ENCODE measurements at regions of chr2 and their contacts with region 1.

Region 1: GRCh38 chr2:181104512-181105115 is 124.2 kb downstream of the UBE2E3 start:
- DNase-seq: peak; percentile 20
- H3K4me3 ChIP-seq: no peak overlapping the region; a peak in 1 of 4 replicates
- H3K27ac ChIP-seq: no peak overlapping the region; a peak in 1 of 4 replicates
- H3K4me1 ChIP-seq: peaks cover 16 to 19% of the 10 kb centered on the region in 2 experiments; a peak in 3 of 4 replicates
- H3K27me3 ChIP-seq: no peaks in the 10 kb centered on the region
- CTCF ChIP-seq: peak; percentile 89
- EP300 ChIP-seq: no peak
- RAD21 ChIP-seq: peak; percentile 89

Region 2: DNA sequence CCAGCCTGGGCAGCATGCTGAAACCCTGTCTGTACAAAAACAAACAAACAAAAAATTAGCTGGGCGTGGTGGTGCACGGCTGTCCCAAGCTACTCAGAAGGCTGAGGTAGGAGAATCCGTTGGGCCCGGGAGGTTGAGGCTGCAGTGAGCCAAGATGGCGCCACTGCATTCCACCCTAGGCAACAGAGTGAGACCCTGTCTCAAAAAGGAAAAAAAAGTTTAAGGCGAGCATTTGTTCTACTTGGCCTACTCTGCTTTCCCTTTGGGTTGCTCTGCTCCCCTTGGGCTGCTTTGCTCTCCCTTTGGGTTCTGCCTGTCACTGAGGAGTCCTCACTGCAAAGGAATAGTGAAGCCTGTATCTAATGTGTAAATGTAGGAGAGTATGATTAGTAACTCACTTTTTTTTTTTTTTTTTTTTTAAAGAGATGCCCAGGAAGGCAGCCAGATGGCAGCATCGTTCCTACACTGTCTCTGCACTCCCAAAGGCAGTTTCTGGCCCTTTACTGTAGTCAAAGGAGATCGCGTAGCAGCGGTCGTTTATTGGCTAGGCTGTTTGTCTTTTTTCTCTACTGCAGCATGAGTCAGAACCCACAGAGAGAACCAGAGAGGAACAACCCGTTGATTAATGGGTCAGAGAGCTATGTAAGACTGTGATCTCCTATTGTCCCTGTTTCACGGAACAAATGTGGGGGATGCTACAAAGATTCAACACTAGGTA is 979.2 kb before region 1 on chr2:
- CTCF ChIA-PET with region 1: interaction called, 11 read pairs
- POLR2A ChIA-PET with region 1: no interaction called
- DNase-seq: peak; percentile 48
- H3K4me3 ChIP-seq: no peak overlapping the region; a peak in 1 of 4 replicates
- H3K27ac ChIP-seq: peak overlapping the region in 1 of 2 experiments; percentile 2; a peak in 1 of 4 replicates
- H3K4me1 ChIP-seq: peaks cover 2 to 3% of the 10 kb centered on the region in 2 experiments; a peak in 2 of 4 replicates
- H3K27me3 ChIP-seq: no peaks in the 10 kb centered on the region
- CTCF ChIP-seq: peak; percentile 70
- EP300 ChIP-seq: no peak; a peak in 1 of 4 replicates
- RAD21 ChIP-seq: peak; percentile 89

Region 3: DNA sequence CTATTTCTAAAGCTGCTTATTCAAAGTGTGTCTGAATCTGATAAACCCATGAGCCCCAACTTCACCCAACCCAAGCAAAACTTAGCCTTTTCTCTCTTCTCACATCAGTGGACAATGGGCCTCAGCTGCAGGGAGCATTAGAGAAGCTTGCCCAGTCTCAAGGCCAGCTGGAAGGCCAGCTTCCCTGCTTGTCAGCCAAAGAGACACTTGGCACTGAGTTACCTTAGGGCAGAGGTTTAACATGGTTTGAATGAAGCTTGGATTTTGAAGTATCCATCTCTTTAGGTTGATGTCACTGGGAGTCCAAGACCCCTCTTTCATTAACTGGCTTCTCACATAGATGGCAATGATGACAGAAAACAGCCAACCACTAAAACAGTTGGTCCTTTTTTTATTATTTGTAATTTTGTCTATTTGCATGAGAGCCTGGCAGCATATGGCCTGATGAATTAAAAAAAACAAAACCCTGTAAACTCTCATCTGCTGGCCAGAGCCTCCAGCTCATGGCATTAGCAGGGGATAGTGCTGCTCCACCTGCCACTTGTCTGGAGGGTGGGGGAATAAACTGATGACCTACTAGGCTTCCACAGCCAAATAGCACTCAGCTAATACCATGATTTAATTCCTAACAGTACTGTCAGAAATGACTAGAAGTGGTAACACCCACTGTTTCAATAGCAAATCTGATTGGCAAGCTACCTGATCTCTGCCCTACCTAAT is 12.8 kb after region 1 on chr2:
- CTCF ChIA-PET with region 1: interaction called, 11 read pairs
- POLR2A ChIA-PET with region 1: no interaction called
- DNase-seq: no peak
- H3K4me3 ChIP-seq: no peak overlapping the region
- H3K27ac ChIP-seq: no peak overlapping the region
- H3K4me1 ChIP-seq: peaks cover 0 to 5% of the 10 kb centered on the region in 2 experiments; a peak in 1 of 4 replicates
- H3K27me3 ChIP-seq: no peaks in the 10 kb centered on the region
- CTCF ChIP-seq: no peak
- EP300 ChIP-seq: no peak
- RAD21 ChIP-seq: no peak

Region 4: GRCh38 chr2:181364492-181365170 is 260.0 kb after region 1 on chr2:
- CTCF ChIA-PET with region 1: no interaction called
- POLR2A ChIA-PET with region 1: no interaction called
- DNase-seq: no peak
- H3K4me3 ChIP-seq: no peak overlapping the region
- H3K27ac ChIP-seq: no peak overlapping the region
- H3K4me1 ChIP-seq: no peaks in the 10 kb centered on the region
- H3K27me3 ChIP-seq: no peaks in the 10 kb centered on the region
- CTCF ChIP-seq: no peak
- EP300 ChIP-seq: no peak
- RAD21 ChIP-seq: no peak

Region 5: DNA sequence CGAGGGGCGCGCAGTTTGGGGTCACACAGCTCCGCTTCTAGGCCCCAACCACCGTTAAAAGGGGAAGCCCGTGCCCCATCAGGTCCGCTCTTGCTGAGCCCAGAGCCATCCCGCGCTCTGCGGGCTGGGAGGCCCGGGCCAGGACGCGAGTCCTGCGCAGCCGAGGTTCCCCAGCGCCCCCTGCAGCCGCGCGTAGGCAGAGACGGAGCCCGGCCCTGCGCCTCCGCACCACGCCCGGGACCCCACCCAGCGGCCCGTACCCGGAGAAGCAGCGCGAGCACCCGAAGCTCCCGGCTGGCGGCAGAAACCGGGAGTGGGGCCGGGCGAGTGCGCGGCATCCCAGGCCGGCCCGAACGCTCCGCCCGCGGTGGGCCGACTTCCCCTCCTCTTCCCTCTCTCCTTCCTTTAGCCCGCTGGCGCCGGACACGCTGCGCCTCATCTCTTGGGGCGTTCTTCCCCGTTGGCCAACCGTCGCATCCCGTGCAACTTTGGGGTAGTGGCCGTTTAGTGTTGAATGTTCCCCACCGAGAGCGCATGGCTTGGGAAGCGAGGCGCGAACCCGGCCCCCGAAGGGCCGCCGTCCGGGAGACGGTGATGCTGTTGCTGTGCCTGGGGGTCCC is 352.6 kb after region 1 on chr2 and contains the start of gene ITGA4:
- CTCF ChIA-PET with region 1: interaction called, 65 read pairs
- POLR2A ChIA-PET with region 1: no interaction called
- DNase-seq: peak; percentile 92
- H3K4me3 ChIP-seq: peak within 1 kb of the TSS; percentile 74 to 82
- H3K27ac ChIP-seq: peak within 1 kb of the TSS in 1 of 2 experiments; percentile 42; a peak in 1 of 4 replicates
- H3K4me1 ChIP-seq: peaks cover 0 to 14% of the 10 kb centered on the region in 2 experiments; a peak in 2 of 4 replicates
- H3K27me3 ChIP-seq: no peaks in the 10 kb centered on the region
- CTCF ChIP-seq: peak; percentile 71
- EP300 ChIP-seq: no peak
- RAD21 ChIP-seq: peak; percentile 79
- polyA plus RNA-seq, gene ITGA4: 10.5 and 12.5 TPM in 2 replicates

Region 6: DNA sequence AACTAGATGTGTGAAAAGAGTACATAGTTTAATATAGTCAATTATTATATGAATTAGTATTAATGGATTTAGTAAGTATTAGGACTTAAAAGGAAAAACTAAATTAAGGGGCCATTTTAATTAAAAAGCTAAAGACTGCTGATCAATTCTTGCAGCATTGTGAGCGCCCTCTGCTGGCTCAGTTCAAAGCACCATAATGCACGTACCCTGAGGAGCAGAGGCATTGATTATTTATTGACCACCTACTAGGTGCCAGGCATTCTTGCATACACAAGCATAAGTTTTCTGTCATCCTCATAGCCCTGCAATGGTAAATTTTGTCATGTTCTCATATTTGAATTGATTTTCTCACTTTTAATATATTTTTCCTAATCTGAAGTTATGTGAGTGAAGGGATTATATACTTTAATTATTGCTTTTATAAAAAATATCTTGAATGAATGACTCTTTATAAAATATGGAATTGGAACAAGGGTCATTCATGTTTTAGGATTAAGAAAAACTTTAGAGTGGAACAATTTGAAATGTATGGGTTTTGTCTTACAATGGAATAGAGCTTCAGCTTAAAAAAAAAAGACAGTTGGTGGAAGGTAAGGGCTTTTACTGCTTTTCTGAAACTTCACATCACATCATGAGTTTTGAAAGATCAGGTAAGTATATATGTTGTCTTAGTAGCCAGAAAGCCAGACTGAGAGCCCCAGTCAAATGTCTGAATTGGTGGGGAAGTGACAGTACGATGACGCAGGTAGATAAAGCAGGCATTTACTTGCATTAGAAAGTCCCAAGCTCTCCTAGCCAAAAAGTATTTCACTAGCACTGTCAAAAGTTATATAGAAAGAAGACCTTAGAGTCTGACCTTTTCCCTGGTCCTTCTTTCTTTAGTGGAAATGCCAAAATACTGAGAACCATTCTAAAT is 362.3 kb after region 1 on chr2:
- CTCF ChIA-PET with region 1: interaction called, 37 read pairs
- POLR2A ChIA-PET with region 1: no interaction called
- DNase-seq: peak; percentile 15
- H3K4me3 ChIP-seq: no peak overlapping the region
- H3K27ac ChIP-seq: peak overlapping the region in 1 of 2 experiments; percentile 42; a peak in 1 of 4 replicates
- H3K4me1 ChIP-seq: peaks cover 0 to 7% of the 10 kb centered on the region in 2 experiments; a peak in 2 of 4 replicates
- H3K27me3 ChIP-seq: no peaks in the 10 kb centered on the region
- CTCF ChIP-seq: peak; percentile 90
- EP300 ChIP-seq: no peak
- RAD21 ChIP-seq: peak; percentile 57

Region 7: GRCh38 chr2:181573140-181573736 is 468.6 kb after region 1 on chr2:
- CTCF ChIA-PET with region 1: interaction called, 24 read pairs
- POLR2A ChIA-PET with region 1: no interaction called
- DNase-seq: peak; percentile 26
- H3K4me3 ChIP-seq: no peak overlapping the region; a peak in 1 of 4 replicates
- H3K27ac ChIP-seq: no peak overlapping the region
- H3K4me1 ChIP-seq: peaks cover 0 to 3% of the 10 kb centered on the region in 2 experiments; a peak in 1 of 4 replicates
- H3K27me3 ChIP-seq: no peaks in the 10 kb centered on the region
- CTCF ChIP-seq: peak; percentile 73
- EP300 ChIP-seq: no peak
- RAD21 ChIP-seq: peak; percentile 86

Measured in SK-N-SH (cell line).